Mammary epithelial cell (primary cell): ENCODE measurements at regions of chr4 and their contacts with region 1.

Region 1: GRCh38 chr4:7067452-7068278 is at the start of gene GRPEL1:
- DNase-seq: peak; percentile 100
- H3K4me3 ChIP-seq: peak within 1 kb of the TSS; percentile 75 to 94 (median 93)
- H3K27ac ChIP-seq: peak within 1 kb of the TSS; percentile 79
- H3K4me1 ChIP-seq: peaks cover 16% of the 10 kb centered on the region
- H3K27me3 ChIP-seq: no peaks in the 10 kb centered on the region
- CTCF ChIP-seq: no peak
- total RNA-seq, gene GRPEL1: 18.5 to 66.1 TPM

Region 2: DNA sequence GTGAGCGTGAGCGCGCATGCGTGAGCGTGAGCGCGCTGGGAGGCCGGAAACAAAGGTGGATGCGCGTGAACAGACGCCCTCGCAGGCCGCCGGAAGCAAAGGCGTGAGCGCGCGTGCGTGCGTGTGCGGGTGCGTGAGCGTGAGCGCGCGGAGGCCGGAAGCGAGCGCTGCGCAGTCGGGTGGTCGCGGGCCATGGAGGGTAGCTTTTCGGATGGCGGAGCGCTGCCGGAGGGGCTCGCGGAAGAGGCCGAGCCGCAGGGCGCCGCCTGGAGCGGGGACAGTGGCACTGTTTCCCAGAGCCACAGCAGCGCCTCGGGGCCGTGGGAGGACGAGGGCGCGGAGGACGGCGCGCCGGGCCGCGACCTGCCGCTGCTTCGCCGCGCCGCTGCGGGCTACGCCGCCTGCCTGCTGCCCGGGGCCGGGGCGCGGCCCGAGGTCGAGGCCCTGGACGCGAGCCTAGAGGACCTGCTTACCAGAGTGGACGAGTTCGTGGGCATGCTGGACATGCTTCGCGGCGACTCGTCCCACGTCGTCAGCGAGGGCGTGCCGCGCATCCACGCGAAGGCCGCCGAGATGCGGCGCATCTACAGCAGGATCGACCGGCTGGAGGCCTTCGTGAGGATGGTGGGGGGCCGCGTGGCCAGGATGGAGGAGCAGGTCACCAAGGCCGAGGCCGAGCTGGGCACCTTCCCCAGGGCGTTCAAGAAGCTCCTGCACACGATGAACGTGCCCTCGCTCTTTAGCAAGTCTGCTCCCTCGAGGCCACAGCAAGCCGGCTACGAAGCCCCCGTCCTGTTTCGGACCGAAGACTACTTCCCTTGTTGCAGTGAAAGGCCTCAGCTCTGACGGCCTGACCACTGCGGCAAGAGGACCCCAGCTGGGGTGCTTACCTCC is 351.4 kb before region 1 on chr4 and contains the start of gene BLOC1S4:
- CTCF ChIA-PET with region 1: no interaction called
- dilution Hi-C with region 1: no loop called
- in situ Hi-C with region 1: loop called (anchors 25 kb)
- intact Hi-C with region 1: loop called (anchors 1 kb)
- DNase-seq: peak; percentile 85
- H3K4me3 ChIP-seq: peak within 1 kb of the TSS; percentile 48 to 95 (median 90)
- H3K27ac ChIP-seq: peak within 1 kb of the TSS; percentile 55
- H3K4me1 ChIP-seq: peaks cover 4% of the 10 kb centered on the region
- H3K27me3 ChIP-seq: no peaks in the 10 kb centered on the region
- CTCF ChIP-seq: peak in 1 of 2 donors; percentile 29
- total RNA-seq, gene BLOC1S4: 14.1 to 15.3 TPM

Region 3: DNA sequence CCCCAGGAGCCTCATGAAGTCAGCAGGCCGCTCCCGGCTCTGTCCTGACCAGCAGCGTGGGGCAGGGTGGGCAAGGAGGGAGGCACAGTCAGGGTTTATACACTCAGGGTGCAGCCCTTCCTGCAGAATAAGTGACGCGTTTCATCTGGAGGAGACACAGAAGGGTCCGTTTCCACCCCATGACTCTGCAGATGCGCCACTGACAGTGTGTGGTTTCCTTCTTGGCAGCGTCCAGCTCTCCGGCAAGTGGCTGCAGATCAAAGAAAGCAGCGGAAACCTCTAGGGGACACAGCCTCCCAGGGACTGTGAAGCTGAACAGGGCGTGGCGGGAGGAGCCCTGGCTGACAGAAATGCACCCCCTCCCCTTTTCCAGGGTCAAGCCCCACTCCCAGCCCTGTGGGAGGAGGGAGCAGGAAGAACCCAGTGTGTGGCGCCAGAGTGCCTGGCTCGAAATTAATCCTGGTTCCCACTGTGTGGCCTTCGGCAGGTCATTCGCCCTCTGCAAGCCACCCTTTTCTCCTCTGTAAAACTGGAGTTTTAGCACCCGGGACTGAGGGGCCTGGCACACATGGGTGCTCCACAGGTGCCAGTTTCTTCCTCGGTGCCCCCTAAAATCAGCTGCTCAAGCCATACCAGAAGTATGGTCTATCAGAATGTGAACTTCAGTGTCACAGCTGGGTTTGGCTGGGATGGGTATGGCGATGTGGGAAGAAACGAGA is 175.3 kb before region 1 on chr4:
- CTCF ChIA-PET with region 1: no interaction called
- dilution Hi-C with region 1: no loop called
- in situ Hi-C with region 1: no loop called
- intact Hi-C with region 1: loop called (anchors 5 kb)
- DNase-seq: no peak
- H3K4me3 ChIP-seq: no peak overlapping the region
- H3K27ac ChIP-seq: no peak overlapping the region
- H3K4me1 ChIP-seq: peaks cover 5% of the 10 kb centered on the region
- H3K27me3 ChIP-seq: no peaks in the 10 kb centered on the region
- CTCF ChIP-seq: peak in 1 of 2 donors; percentile 34

Region 4: DNA sequence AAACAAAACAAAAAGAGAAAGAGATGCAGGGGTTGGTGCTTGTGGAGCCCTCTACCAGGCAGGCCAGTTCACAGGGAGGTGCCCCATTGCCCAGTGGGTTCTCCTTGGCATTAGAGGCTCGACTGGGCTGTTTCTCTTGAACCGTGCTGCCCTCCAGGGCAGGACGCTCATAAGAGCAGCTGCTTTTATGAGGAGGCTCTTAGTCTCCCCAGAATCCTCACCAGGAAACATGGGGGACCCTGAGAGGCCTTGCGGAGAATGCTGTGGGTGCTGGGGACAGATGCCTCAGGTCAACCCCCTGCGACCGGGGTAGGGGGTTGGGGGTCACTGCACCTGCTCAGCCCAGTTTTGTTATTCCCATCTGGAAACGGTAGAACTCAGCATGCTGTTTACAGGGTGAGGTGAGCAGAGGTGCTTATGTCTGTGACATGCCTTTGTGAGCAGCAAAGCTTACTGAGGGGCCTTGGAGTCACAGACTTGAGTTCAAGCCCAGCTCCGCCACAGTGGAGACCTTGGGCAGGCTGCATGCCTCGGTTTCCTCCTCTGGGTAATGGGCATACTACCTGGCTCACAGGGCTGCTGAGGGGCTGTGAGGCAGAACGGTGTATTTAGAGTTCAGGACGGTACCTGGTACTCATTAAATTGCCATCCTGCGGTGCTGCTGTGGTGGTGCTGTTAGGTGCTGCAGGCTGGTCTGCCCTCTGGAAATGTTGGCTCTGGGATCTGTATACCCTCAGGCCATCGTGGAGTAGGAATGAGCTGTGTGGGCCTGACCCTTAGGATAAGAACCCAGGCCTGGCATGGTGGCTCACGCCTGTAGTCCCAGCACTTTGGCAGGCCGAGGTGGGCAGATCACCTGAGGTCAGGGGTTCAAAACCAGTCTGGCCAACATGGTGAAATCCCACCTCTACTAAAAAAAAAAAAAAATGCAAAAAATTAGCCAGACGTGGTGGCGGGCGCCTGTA is 152.3 kb before region 1 on chr4:
- CTCF ChIA-PET with region 1: no interaction called
- dilution Hi-C with region 1: no loop called
- in situ Hi-C with region 1: no loop called
- intact Hi-C with region 1: no loop called
- DNase-seq: no peak
- H3K4me3 ChIP-seq: no peak overlapping the region
- H3K27ac ChIP-seq: no peak overlapping the region
- H3K4me1 ChIP-seq: peaks cover 23% of the 10 kb centered on the region
- H3K27me3 ChIP-seq: no peaks in the 10 kb centered on the region
- CTCF ChIP-seq: no peak

Region 5: GRCh38 chr4:6974138-6974848 is 93.4 kb before region 1 on chr4:
- CTCF ChIA-PET with region 1: interaction called, 4 read pairs
- dilution Hi-C with region 1: no loop called
- in situ Hi-C with region 1: loop called in 1 of 2 experiments (anchors 5 kb)
- intact Hi-C with region 1: loop called (anchors 1 kb)
- DNase-seq: peak; percentile 76
- H3K4me3 ChIP-seq: no peak overlapping the region
- H3K27ac ChIP-seq: no peak overlapping the region
- H3K4me1 ChIP-seq: no peaks in the 10 kb centered on the region
- H3K27me3 ChIP-seq: no peaks in the 10 kb centered on the region
- CTCF ChIP-seq: peak; percentile 99

Region 6: GRCh38 chr4:6999172-7000055 is 68.3 kb before region 1 on chr4:
- CTCF ChIA-PET with region 1: no interaction called
- dilution Hi-C with region 1: no loop called
- in situ Hi-C with region 1: no loop called
- intact Hi-C with region 1: loop called (anchors 2 kb)
- DNase-seq: peak; percentile 88
- H3K4me3 ChIP-seq: no peak overlapping the region
- H3K27ac ChIP-seq: peak overlapping the region; percentile 87
- H3K4me1 ChIP-seq: peaks cover 46% of the 10 kb centered on the region
- H3K27me3 ChIP-seq: no peaks in the 10 kb centered on the region
- CTCF ChIP-seq: no peak

Region 7: DNA sequence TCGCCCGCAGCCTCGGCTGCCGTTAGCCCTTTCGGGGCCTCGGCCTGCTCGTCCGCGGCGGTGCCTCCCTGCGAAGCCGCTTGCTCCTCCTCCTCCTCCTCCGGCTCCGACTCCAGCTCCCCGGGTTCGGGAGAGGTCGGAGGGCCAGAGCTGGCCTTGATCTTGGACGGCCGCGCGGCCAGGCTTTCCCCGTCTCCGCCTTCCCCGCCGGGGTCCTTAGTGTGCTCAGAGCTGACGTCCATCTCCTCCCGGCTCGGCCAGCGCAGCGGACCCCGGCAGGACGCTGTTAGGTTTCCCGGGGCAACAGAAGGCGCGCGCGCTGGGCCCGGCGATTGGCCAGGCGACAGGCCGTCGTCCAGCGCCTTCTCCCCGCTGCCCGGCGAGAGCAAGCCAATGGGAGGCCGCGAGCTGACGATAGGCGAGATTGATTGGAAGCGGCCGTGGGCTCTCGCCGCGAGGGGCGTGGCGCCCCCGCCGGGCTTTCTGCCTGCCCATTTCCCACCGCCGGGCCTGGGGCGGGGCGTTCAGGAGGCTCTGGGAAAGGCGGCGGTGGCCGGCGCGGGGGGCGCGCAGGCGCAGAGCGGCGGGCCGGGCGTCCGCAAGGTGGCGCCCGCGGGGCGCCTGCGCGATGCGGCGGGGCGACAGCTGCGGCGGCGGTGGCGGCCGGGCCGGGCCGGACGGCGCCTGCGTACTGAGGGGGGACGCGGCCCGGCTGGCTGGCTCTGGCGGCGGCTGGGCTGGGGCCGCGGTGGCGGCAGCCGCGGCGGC is 24.8 kb before region 1 on chr4 and contains the start of gene TADA2B:
- CTCF ChIA-PET with region 1: no interaction called
- dilution Hi-C with region 1: no loop called
- in situ Hi-C with region 1: no loop called
- intact Hi-C with region 1: loop called (anchors 1 kb)
- DNase-seq: peak; percentile 98
- H3K4me3 ChIP-seq: peak within 1 kb of the TSS; percentile 92 to 98 (median 93)
- H3K27ac ChIP-seq: peak within 1 kb of the TSS; percentile 87
- H3K4me1 ChIP-seq: peaks cover 20% of the 10 kb centered on the region
- H3K27me3 ChIP-seq: no peaks in the 10 kb centered on the region
- CTCF ChIP-seq: peak; percentile 23 to 31
- total RNA-seq, gene TADA2B: 13.3 to 17.2 TPM

Region 8: GRCh38 chr4:7342223-7343080 is 274.8 kb after region 1 on chr4:
- CTCF ChIA-PET with region 1: no interaction called
- dilution Hi-C with region 1: no loop called
- in situ Hi-C with region 1: no loop called
- intact Hi-C with region 1: no loop called
- DNase-seq: no peak
- H3K4me3 ChIP-seq: no peak overlapping the region
- H3K27ac ChIP-seq: no peak overlapping the region
- H3K4me1 ChIP-seq: no peaks in the 10 kb centered on the region
- H3K27me3 ChIP-seq: no peaks in the 10 kb centered on the region
- CTCF ChIP-seq: no peak